Ascending aorta (tissue), 2 donors: ENCODE measurements at regions of chr12 and their contacts with region 1.

Region 1: GRCh38 chr12:108313606-108314351 is 25.3 kb downstream of the CMKLR1 start:
- DNase-seq: no peak
- H3K4me3 ChIP-seq: no peak overlapping the region
- H3K27ac ChIP-seq: peak overlapping the region; percentile 54 to 84
- H3K4me1 ChIP-seq: peaks cover 13 to 60% of the 10 kb centered on the region in 2 donors
- H3K27me3 ChIP-seq: no peaks in the 10 kb centered on the region
- CTCF ChIP-seq: no peak

Region 2: GRCh38 chr12:108271951-108272872 is 41.6 kb before region 1 on chr12:
- intact Hi-C with region 1: no loop called
- DNase-seq: no peak
- H3K4me3 ChIP-seq: no peak overlapping the region
- H3K27ac ChIP-seq: no peak overlapping the region
- H3K4me1 ChIP-seq: no peaks in the 10 kb centered on the region
- H3K27me3 ChIP-seq: no peaks in the 10 kb centered on the region
- CTCF ChIP-seq: no peak

Region 3: GRCh38 chr12:108349278-108349688 is 35.5 kb after region 1 on chr12:
- intact Hi-C with region 1: loop called (anchors 2 kb)
- DNase-seq: peak; percentile 16 to 83
- H3K4me3 ChIP-seq: peak overlapping the region in 1 of 2 donors; percentile 5
- H3K27ac ChIP-seq: peak overlapping the region; percentile 77 to 82
- H3K4me1 ChIP-seq: peaks cover 3 to 9% of the 10 kb centered on the region in 2 donors
- H3K27me3 ChIP-seq: no peaks in the 10 kb centered on the region
- CTCF ChIP-seq: no peak